ENCODE measurements at regions of chr7 and their contacts with region 1.

Region 1: GRCh38 chr7:22093001-22093400 is 147.3 kb upstream of the CDCA7L start:
- DNase-seq: no peak
- H3K4me3 ChIP-seq: no peak overlapping the region
- H3K4me3 Mint-ChIP-seq: no peak overlapping the region
- H3K27ac ChIP-seq: no peak overlapping the region
- H3K27ac Mint-ChIP-seq: no peak overlapping the region
- H3K4me1 ChIP-seq: no peaks in the 10 kb centered on the region
- H3K4me1 Mint-ChIP-seq: no peaks in the 10 kb centered on the region
- H3K27me3 ChIP-seq: no peaks in the 10 kb centered on the region
- H3K27me3 Mint-ChIP-seq: peaks cover 4 to 6% of the 10 kb centered on the region in 2 donors

Region 2: GRCh38 chr7:22103255-22103969 is 10.4 kb after region 1 on chr7:
- CTCF ChIA-PET with region 1: interaction called, 14 read pairs
- POLR2A ChIA-PET with region 1: no interaction called
- DNase-seq: peak; percentile 26 to 64 (median 36)
- H3K4me3 ChIP-seq: no peak overlapping the region
- H3K4me3 Mint-ChIP-seq: peak overlapping the region in 2 of 7 donors; percentile 13 to 37
- H3K27ac ChIP-seq: no peak overlapping the region
- H3K27ac Mint-ChIP-seq: peak overlapping the region in 1 of 8 donors; percentile 36
- H3K4me1 ChIP-seq: no peaks in the 10 kb centered on the region
- H3K4me1 Mint-ChIP-seq: peaks cover 3 to 7% (median 4%) of the 10 kb centered on the region in 3 donors
- H3K27me3 ChIP-seq: no peaks in the 10 kb centered on the region
- H3K27me3 Mint-ChIP-seq: peaks cover 1 to 23% of the 10 kb centered on the region in 2 donors

Measured in CD8-positive, alpha-beta memory T cell (primary cell).